K562 (cell line): ENCODE measurements at regions of chr1 and their contacts with region 1.

Region 1: DNA sequence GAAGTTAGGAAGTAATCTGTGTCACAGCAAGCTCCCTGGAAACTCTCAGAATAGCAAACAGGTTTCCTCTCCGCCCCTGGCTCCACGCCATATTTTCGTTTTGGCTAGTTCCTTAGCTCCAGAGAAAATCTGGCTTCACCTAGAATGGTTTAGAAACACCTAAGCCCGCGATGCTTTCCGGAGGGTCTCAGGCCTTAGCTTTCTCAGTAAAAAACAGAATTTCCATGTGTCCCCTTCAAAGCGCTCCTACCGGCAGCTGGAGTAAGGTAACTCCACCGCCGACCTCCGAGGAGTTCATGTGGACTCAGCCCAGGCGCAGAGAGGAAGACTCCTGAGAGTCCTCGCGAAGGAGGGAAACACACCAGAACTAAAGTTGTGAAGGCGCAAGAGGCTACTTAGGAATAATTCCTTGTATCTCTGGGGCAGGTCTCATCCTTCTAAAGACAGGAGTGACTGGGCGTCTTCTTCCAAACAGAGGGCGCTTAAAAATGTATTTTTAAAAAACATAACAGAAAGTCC is 406 bp downstream of the KIAA0040 start:
- DNase-seq: peak; percentile 44 to 59 (median 50)
- ATAC-seq: peak; percentile 69
- H3K4me3 ChIP-seq: peak overlapping the region; percentile 44
- H3K27ac ChIP-seq: peak overlapping the region; percentile 52
- H3K4me1 ChIP-seq: peaks cover 13 to 28% of the 10 kb centered on the region in 2 experiments
- H3K27me3 ChIP-seq: peaks cover 3 to 6% of the 10 kb centered on the region in 2 experiments; a peak in 3 of 5 replicates
- CTCF ChIP-seq: 0 out of 6 replicates have a peak, but pooled peaks of 1 of the 3 experiments have one; percentile 14
- EP300 ChIP-seq: no peak
- POLR2A ChIP-seq: no peak
- RAD21 ChIP-seq: no peak

Region 2: DNA sequence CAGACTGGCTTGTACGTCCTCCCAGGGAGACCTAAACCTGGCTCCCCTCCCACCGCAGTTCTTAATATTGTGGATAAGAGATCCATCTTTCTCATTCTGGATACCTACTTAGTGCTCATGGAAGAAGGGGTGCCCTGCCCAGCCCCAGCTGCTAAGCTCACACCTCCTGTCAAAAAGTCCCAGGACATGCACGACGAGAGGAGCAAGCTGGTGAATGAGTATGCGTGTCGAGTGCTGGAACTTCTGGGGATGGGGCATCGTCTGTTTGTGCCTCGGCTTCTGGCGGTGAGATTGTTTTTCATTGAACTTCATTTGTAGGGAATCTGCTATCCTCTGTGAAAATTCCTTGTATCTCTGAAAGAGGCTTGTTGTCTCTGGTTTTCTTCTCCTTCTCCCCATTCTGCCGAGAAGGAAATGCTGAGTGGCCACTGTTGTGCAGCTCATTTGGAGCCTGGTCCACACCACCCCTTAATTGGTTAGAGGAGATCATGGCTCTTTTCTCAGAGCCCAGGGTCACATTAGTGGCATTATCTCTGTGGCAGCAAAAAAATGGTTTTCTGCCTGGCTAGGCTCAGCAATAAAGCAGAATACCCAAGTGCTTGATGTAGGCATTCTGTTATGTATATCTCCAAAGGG is 391.8 kb before region 1 on chr1:
- CTCF ChIA-PET with region 1: no interaction called
- POLR2A ChIA-PET with region 1: no interaction called
- in situ Hi-C with region 1: no loop called
- intact Hi-C with region 1: no loop called
- DNase-seq: no peak
- ATAC-seq: no peak; the same call in 2 of the 3 replicates
- H3K4me3 ChIP-seq: no peak overlapping the region
- H3K27ac ChIP-seq: no peak overlapping the region
- H3K4me1 ChIP-seq: peaks cover 2 to 9% of the 10 kb centered on the region in 2 experiments; a peak in 2 of 5 replicates
- H3K27me3 ChIP-seq: no peaks in the 10 kb centered on the region
- CTCF ChIP-seq: no peak
- EP300 ChIP-seq: no peak
- POLR2A ChIP-seq: no peak
- RAD21 ChIP-seq: no peak

Region 3: DNA sequence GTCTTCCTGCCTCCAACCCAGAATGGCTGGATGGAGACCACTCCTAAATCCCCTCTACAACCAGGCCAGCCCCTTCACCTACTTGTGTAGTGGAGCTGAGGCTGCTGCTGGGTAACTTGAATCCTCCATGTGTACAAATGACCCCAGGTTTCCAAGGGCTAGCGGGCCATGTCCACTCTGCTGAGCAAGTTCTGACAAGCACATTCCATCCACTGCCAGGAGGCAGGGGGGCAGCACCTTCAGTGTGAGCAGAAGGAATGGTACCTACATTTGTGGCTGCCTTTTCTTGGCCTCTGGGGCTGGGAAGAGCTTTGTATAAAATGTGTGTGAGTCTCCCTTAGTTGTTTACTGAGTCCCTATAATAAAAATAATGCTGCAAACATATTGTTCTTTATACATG is 14.1 kb before region 1 on chr1:
- CTCF ChIA-PET with region 1: no interaction called
- POLR2A ChIA-PET with region 1: interaction called, 24 read pairs
- in situ Hi-C with region 1: no loop called
- intact Hi-C with region 1: no loop called
- DNase-seq: no peak
- ATAC-seq: no peak
- H3K4me3 ChIP-seq: no peak overlapping the region
- H3K27ac ChIP-seq: no peak overlapping the region
- H3K4me1 ChIP-seq: peaks cover 11 to 21% of the 10 kb centered on the region in 2 experiments; a peak in 3 of 5 replicates
- H3K27me3 ChIP-seq: no peaks in the 10 kb centered on the region
- CTCF ChIP-seq: no peak
- EP300 ChIP-seq: no peak
- POLR2A ChIP-seq: no peak
- RAD21 ChIP-seq: no peak

Region 4: DNA sequence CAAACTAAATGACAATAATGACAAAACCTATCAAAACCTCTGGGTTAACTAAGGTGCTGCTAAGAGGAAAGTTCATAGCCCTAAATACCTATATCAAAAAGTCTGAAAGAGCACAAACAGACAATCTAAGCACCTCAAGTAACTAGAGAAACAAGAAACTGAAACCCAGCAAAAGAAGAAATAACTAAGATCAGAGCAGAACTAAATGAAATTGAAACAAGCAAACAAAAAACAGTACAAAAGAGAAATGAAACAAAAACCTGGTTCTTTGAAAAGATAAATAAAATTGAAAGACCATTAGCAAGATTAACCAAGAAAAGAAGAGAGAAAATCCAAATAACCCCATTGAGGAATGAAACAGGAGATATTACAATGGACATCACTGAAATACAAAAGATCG is 45.2 kb after region 1 on chr1:
- CTCF ChIA-PET with region 1: no interaction called
- POLR2A ChIA-PET with region 1: no interaction called
- in situ Hi-C with region 1: no loop called
- intact Hi-C with region 1: no loop called
- DNase-seq: no peak
- ATAC-seq: no peak
- H3K4me3 ChIP-seq: no peak overlapping the region
- H3K27ac ChIP-seq: no peak overlapping the region
- H3K4me1 ChIP-seq: peaks cover 0 to 7% of the 10 kb centered on the region in 2 experiments; a peak in 3 of 5 replicates
- H3K27me3 ChIP-seq: 0 out of 5 replicates have a peak, but pooled peaks cover 2 to 4% of the 10 kb centered on the region in 2 experiments
- CTCF ChIP-seq: no peak
- EP300 ChIP-seq: no peak
- POLR2A ChIP-seq: no peak
- RAD21 ChIP-seq: no peak